ENCODE measurements at regions of chr5 and their contacts with region 1.

Region 1: DNA sequence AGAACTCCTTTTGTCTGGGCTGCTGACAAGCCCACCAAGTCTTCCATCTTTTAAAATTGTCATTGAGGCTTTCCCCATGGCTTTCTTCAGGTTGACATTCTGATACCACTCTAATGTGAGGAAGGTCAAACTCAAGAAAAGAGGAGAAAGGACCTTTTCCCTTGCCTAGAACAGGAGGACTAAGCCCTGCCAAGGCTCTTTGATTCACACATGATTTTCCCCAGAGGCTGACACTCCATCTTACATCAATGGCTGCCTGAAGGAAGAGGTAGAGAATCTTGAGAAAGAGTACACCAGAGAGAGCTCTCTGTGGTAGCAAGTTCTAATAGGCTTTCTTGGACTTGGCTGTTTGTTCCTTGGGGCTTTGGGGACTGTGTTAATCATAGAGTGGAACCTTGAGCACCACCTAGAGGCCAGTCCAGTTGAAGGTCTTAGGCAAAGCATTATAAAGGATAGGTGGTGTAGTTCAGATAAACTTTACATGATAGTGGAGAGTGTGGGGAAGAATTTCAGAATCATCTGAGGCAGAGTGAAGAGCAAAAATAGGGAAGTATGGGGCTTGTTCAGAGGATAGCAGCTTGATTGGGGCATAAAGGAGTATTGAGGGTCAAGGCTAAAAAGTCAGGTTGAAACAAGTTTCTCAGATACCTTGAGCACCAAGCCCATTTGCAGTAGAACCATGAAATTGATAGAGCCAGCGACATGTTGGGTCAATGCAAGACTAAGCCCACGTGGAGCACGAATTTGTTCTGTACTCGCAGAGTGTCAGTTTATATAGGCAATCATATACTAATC is 36.7 kb downstream of the NDFIP1 start:
- DNase-seq: peak; percentile 37 to 44
- H3K4me3 ChIP-seq: no peak overlapping the region
- H3K27ac ChIP-seq: no peak overlapping the region
- H3K4me1 ChIP-seq: no peaks in the 10 kb centered on the region
- H3K27me3 ChIP-seq: no peaks in the 10 kb centered on the region
- CTCF ChIP-seq: peak; percentile 83

Region 2: GRCh38 chr5:141598391-141599350 is 546.6 kb before region 1 on chr5:
- CTCF ChIA-PET with region 1: no interaction called
- POLR2A ChIA-PET with region 1: no interaction called
- intact Hi-C with region 1: loop called (anchors 2 kb)
- DNase-seq: no peak
- H3K4me3 ChIP-seq: no peak overlapping the region
- H3K27ac ChIP-seq: no peak overlapping the region
- H3K4me1 ChIP-seq: peaks cover 6% of the 10 kb centered on the region
- H3K27me3 ChIP-seq: no peaks in the 10 kb centered on the region
- CTCF ChIP-seq: no peak

Region 3: GRCh38 chr5:141664732-141665461 is 480.4 kb before region 1 on chr5:
- CTCF ChIA-PET with region 1: no interaction called
- POLR2A ChIA-PET with region 1: no interaction called
- intact Hi-C with region 1: loop called (anchors 1 kb)
- DNase-seq: peak; percentile 44 to 74
- H3K4me3 ChIP-seq: no peak overlapping the region
- H3K27ac ChIP-seq: no peak overlapping the region
- H3K4me1 ChIP-seq: no peaks in the 10 kb centered on the region
- H3K27me3 ChIP-seq: no peaks in the 10 kb centered on the region
- CTCF ChIP-seq: peak; percentile 93

Region 4: DNA sequence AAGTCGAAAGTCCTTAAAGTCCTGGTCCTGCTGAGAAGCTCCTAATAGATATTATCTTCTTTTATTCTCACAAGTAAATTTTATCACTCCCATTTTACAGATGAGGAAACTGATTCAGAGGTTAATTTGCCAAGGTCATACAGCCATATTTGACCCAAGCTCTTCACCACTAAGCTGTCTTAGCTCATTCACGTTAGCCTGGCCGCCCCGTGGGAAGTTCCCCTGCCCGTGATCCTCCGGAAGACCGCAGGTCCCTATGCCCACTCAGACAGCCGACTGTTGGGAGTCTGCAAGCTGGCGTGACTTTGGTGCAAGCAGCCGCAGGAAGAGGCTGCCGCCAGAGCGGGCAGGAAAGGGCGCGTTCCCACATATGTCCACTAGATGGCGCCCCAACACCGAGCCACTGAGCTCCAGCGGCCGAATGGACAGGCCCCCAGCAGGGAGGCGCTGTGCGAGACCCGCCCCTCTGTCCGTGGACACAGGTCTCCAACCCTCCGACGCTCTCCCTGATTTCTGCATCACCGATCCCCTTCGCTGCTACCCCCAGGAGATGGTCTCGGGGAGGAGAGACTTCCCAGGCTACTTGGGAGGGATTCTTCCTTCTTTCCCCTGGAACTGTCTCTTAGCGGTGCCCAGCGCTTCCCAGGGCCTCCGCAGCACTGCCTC is 453.3 kb before region 1 on chr5:
- CTCF ChIA-PET with region 1: no interaction called
- POLR2A ChIA-PET with region 1: no interaction called
- intact Hi-C with region 1: loop called (anchors 1 kb)
- DNase-seq: peak; percentile 71 to 89
- H3K4me3 ChIP-seq: peak overlapping the region; percentile 46; the same call in 1 of the 2 replicates
- H3K27ac ChIP-seq: no peak overlapping the region
- H3K4me1 ChIP-seq: peaks cover 48% of the 10 kb centered on the region
- H3K27me3 ChIP-seq: no peaks in the 10 kb centered on the region
- CTCF ChIP-seq: peak; percentile 93

Region 5: DNA sequence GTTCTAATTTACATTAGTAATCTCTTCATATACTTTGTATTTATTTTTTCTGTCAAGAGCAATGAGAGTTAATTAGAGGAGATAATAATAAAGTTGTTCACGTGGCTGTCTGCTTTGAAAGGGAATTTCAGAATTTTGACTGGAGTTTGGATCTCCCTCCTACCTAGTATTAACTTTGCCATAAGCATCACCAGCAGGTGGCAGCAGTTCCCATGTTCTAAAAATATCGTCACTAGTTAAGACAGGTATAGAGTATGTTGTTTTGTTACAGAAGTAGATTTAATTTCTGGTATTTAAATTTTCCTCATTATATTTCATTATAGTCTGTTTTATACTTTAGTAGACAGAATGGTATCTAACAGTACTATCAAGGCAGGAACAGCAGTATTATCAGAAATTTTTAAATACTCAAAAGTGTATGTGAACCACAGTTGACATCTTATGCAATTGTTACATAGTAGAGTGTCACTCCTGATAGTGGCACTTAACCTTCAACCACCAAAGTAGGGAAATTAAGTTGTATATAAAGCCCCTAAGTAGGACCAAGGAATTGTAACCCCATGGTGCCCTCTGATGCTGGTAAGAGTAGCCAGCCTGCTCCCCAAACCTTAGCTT is 152.8 kb before region 1 on chr5:
- CTCF ChIA-PET with region 1: interaction called, 8 read pairs
- POLR2A ChIA-PET with region 1: no interaction called
- intact Hi-C with region 1: loop called (anchors 1 kb)
- DNase-seq: peak; percentile 55 to 60
- H3K4me3 ChIP-seq: no peak overlapping the region
- H3K27ac ChIP-seq: no peak overlapping the region
- H3K4me1 ChIP-seq: no peaks in the 10 kb centered on the region
- H3K27me3 ChIP-seq: no peaks in the 10 kb centered on the region
- CTCF ChIP-seq: peak; percentile 90

Region 6: GRCh38 chr5:142006363-142007236 is 138.7 kb before region 1 on chr5:
- CTCF ChIA-PET with region 1: interaction called, 14 read pairs
- POLR2A ChIA-PET with region 1: no interaction called
- intact Hi-C with region 1: no loop called
- DNase-seq: no peak
- H3K4me3 ChIP-seq: no peak overlapping the region
- H3K27ac ChIP-seq: no peak overlapping the region
- H3K4me1 ChIP-seq: no peaks in the 10 kb centered on the region
- H3K27me3 ChIP-seq: no peaks in the 10 kb centered on the region
- CTCF ChIP-seq: no peak

Region 7: DNA sequence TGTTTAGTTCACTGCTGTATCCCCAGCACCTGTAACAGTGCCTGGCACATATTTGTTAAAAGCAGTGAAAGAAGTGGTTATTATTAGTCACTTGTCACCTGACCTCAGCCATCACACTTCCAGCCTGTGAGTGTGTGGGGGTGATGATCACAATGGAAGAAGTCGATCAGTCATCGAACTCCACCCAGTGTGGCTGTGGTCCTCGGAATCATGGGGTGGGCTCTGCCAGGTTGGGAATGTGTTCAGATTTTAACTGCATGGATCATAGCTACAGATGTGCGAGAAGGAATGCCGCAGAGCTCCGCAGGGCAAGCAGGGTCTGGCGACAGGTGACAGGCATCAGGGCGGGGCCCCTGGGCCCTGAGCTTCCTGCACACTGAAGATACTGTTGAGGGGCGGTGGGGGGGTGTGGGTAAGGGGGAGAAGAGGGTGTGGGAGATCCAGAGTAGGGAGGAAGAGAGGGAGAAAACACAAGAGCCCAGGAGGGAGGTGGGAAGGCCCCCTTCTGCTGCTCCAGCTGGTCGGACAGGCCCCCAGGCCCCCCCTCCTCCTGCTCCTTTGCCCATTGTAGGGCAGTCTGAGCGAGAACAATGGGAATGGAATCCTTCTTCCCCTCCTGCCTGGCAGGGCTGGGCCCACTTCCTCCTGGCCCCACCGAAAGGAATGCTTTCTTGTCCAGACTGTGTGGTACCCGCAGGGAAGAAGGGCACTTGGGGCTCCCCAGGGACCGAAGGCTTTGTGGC is 89.9 kb after region 1 on chr5:
- CTCF ChIA-PET with region 1: interaction called, 14 read pairs
- POLR2A ChIA-PET with region 1: no interaction called
- intact Hi-C with region 1: no loop called
- DNase-seq: peak; percentile 57 to 82
- H3K4me3 ChIP-seq: peak overlapping the region; percentile 17; the same call in 1 of the 2 replicates
- H3K27ac ChIP-seq: no peak overlapping the region; the same call in 1 of the 2 replicates
- H3K4me1 ChIP-seq: peaks cover 45% of the 10 kb centered on the region
- H3K27me3 ChIP-seq: no peaks in the 10 kb centered on the region
- CTCF ChIP-seq: no peak